Activated CD4-positive, alpha-beta memory T cell treated with anti-CD3 and anti-CD28 coated beads for 36 hours (primary cell): ENCODE measurements at regions of chr4 and their contacts with region 1.

Region 1: DNA sequence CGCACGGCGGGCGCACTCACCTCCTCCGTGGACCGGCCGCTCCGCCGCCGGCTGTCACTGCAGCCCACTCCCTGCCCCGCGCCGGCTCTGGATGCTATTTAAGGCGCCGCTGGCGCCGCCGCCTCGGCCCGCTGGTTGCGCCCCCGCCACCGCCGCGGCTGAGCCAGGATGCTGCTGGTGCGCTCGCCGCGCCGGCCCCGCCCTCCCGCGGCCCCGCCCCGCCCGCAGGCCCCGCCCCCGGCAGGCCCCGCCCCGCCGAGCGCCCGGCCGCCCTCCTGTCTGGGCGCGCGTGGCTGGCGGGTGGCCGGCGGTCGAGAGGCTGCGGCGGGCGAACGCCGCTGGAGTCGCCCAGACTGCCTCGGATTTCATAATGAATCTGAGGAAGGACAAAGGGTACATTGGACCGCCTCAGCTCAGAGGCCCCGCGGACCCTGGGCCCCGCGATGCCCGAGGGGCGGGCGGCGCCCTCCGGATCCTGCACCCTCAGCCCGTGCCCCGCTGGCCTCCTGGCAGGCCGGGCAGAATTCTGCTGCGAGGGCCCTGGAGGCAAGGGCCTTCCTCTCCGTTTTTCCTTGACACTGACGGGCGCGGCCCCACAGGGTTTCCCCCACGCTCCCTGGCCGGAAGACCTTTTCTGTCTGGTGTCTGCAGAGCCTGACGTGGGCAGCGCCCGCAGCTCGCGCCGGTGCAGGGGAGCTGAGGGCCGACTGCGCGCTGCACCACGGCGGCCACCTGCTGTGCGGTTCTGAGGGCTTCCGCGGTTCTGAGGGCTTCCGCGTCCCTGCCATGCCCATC is at the start of gene ACSL1:
- DNase-seq: peak; percentile 84
- H3K4me3 Mint-ChIP-seq: peak within 1 kb of the TSS; percentile 87
- H3K27ac Mint-ChIP-seq: peak within 1 kb of the TSS; percentile 75
- H3K4me1 Mint-ChIP-seq: peaks cover 37% of the 10 kb centered on the region
- H3K27me3 Mint-ChIP-seq: no peaks in the 10 kb centered on the region
- total RNA-seq, gene ACSL1: 22.0 to 22.2 TPM

Region 2: GRCh38 chr4:184583738-184584502 is 242.2 kb before region 1 on chr4:
- CTCF ChIA-PET with region 1: no interaction called
- POLR2A ChIA-PET with region 1: no interaction called
- intact Hi-C with region 1: loop called (anchors 10 kb)
- DNase-seq: peak; percentile 39
- H3K4me3 Mint-ChIP-seq: no peak overlapping the region
- H3K27ac Mint-ChIP-seq: no peak overlapping the region
- H3K4me1 Mint-ChIP-seq: peaks cover 20% of the 10 kb centered on the region
- H3K27me3 Mint-ChIP-seq: no peaks in the 10 kb centered on the region

Region 3: GRCh38 chr4:184668511-184669114 is 157.5 kb before region 1 on chr4:
- CTCF ChIA-PET with region 1: no interaction called
- POLR2A ChIA-PET with region 1: no interaction called
- intact Hi-C with region 1: no loop called
- DNase-seq: peak; percentile 15
- H3K4me3 Mint-ChIP-seq: no peak overlapping the region
- H3K27ac Mint-ChIP-seq: peak overlapping the region; percentile 61
- H3K4me1 Mint-ChIP-seq: peaks cover 23% of the 10 kb centered on the region
- H3K27me3 Mint-ChIP-seq: no peaks in the 10 kb centered on the region

Region 4: GRCh38 chr4:184745831-184746795 is 80.0 kb before region 1 on chr4:
- CTCF ChIA-PET with region 1: interaction called, 9 read pairs
- POLR2A ChIA-PET with region 1: no interaction called
- intact Hi-C with region 1: loop called (anchors 5 kb)
- DNase-seq: peak; percentile 80
- H3K4me3 Mint-ChIP-seq: no peak overlapping the region
- H3K27ac Mint-ChIP-seq: no peak overlapping the region
- H3K4me1 Mint-ChIP-seq: peaks cover 8% of the 10 kb centered on the region
- H3K27me3 Mint-ChIP-seq: no peaks in the 10 kb centered on the region

Region 5: GRCh38 chr4:184792950-184793555 is 33.0 kb before region 1 on chr4:
- CTCF ChIA-PET with region 1: interaction called, 3 read pairs
- POLR2A ChIA-PET with region 1: interaction called, 9 read pairs
- intact Hi-C with region 1: loop called (anchors 1 kb)
- DNase-seq: peak; percentile 65
- H3K4me3 Mint-ChIP-seq: peak overlapping the region; percentile 2
- H3K27ac Mint-ChIP-seq: no peak overlapping the region
- H3K4me1 Mint-ChIP-seq: peaks cover 27% of the 10 kb centered on the region
- H3K27me3 Mint-ChIP-seq: no peaks in the 10 kb centered on the region

Region 6: DNA sequence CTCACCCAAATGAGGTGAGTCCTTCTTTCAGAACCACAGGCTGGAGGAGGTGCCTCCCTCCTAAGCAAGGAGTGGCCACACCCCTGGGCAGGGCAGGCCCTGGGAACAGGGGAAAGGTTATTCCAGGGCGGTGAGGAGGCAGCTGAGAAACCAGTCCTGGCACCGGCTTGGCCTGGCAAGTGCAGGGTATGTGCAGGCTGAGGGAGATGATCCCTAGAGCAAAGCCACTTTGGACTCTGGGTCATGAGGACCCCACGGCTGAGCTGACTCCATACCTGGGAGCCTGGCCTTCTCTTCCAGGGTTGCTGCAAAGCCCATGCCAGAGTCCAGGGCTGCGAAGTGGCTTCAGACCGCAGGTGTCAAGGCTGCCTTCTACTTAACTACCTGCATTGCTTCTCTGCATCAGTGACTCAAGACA is 142.7 kb after region 1 on chr4:
- CTCF ChIA-PET with region 1: no interaction called
- POLR2A ChIA-PET with region 1: no interaction called
- intact Hi-C with region 1: loop called (anchors 1 kb)
- DNase-seq: no peak
- H3K4me3 Mint-ChIP-seq: no peak overlapping the region
- H3K27ac Mint-ChIP-seq: no peak overlapping the region
- H3K4me1 Mint-ChIP-seq: peaks cover 8% of the 10 kb centered on the region
- H3K27me3 Mint-ChIP-seq: peaks cover 13% of the 10 kb centered on the region